ENCODE measurements at regions of chr10 and their contacts with region 1.

Region 1: DNA sequence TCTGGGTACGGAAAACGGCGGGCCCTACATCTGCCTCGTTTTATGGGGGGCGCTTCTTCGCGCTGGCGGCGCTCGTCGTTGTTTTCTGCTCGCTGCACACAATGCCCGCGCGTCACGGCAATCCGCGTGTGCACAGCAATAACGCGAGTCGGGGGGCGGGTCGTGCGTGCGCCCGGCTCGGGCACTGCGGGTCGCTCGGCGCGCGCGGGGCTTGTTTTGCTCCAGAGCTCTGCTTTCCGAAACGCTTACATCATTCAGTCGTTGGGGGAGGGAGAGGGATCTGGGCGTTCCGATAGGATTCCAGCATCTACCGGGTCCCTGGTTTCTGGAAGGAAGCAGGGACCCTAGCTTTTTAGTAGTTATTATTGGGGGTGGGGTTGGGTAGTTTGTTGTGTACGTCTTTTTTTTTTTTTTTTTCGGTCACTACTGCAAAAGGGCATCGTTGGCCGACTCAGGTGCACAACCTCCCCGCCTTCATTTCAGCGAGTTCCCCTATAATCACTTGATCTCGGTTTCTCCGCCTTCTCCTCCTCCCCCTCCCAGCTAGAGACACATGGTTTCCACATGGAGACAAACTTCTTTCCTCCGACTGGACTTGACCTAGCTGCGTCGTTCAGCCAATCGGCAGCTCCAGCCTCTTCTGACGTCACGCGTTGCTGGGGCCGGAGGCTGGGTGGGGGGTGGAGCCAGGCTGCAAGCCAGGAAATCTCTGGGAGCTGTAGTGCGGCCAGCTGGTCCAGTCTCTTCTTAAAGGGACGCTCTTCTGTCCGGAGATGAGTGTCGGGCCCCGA is 3.5 kb downstream of the MXI1 start:
- DNase-seq: peak; percentile 75 to 94 (median 86)
- ATAC-seq: peak; percentile 53 to 64
- H3K4me3 Mint-ChIP-seq: peak overlapping the region; percentile 85 to 98 (median 94)
- H3K27ac Mint-ChIP-seq: peak overlapping the region; percentile 86 to 98 (median 97)
- H3K4me1 Mint-ChIP-seq: peaks cover 36 to 67% (median 48%) of the 10 kb centered on the region in 4 donors
- H3K27me3 Mint-ChIP-seq: peaks cover 0 to 16% (median 15%) of the 10 kb centered on the region in 5 donors

Region 2: DNA sequence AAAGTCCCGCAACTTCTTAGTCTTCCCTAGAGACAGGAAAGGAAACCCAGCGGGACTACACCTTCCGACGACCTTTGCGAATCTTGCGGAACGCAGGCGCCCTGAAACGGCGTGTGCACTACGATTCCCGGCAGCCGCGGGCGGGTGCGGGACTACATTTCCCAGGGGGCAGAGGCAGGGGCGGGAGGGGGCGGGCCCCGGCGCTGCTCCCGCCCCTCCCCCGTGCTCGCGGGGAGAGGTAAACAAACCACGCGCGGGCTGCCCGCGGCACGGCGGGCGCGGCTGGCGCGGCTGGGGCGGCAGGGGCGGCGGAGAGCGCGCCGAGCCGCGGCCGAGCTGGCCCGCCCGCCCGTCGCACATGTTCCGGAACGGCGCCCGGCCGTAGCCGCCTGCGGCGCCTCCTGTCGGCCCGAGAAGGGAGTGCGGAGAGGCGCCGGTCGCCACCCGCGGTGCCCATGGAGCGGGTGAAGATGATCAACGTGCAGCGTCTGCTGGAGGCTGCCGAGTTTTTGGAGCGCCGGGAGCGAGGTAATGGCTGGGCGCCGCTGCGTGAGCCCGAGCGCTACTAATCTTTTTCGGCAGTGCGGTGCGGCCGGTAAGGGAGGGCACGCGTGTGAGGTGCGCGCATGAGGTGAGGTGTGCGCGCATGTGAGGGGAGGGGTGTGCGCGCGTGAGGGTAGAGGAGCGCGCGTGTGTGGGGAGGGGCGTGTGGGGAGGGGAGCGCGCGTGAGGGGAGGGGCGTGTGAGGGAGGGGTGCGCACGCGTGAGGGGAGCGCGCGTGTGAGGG is 15.1 kb after region 1 on chr10:
- POLR2A ChIA-PET with region 1: interaction called, 153 read pairs
- DNase-seq: peak; percentile 82 to 92 (median 88)
- ATAC-seq: peak; percentile 67 to 71
- H3K4me3 Mint-ChIP-seq: peak overlapping the region; percentile 89 to 96 (median 94)
- H3K27ac Mint-ChIP-seq: peak overlapping the region; percentile 82 to 99 (median 96)
- H3K4me1 Mint-ChIP-seq: peaks cover 16 to 39% (median 36%) of the 10 kb centered on the region in 4 donors
- H3K27me3 Mint-ChIP-seq: peaks cover 0 to 20% (median 7%) of the 10 kb centered on the region in 5 donors

Region 3: DNA sequence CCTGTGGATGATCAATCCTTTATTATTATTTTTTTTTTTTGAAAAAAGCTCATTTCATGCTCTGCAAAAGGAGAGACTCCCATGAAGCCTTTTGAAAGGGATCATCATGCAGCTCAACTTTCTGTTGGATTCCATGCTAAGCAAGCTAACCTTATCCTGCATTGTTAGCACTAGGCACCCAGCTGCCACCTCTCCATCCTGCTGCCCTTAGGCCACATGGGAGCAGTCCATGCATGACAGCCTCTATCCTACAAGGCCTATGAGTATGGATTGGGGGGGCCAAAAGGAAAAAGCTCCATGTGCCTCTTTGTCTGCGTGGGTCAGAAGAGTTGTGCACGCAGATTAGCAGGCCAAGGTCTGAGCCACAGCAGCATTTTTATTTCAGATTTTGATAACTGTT is 74.6 kb after region 1 on chr10:
- POLR2A ChIA-PET with region 1: no interaction called
- DNase-seq: no peak
- ATAC-seq: no peak
- H3K4me3 Mint-ChIP-seq: no peak overlapping the region
- H3K27ac Mint-ChIP-seq: no peak overlapping the region
- H3K4me1 Mint-ChIP-seq: no peaks in the 10 kb centered on the region
- H3K27me3 Mint-ChIP-seq: no peaks in the 10 kb centered on the region